ENCODE measurements at regions of chr10 and their contacts with region 1.

Region 1: GRCh38 chr10:105950410-105950809 is 1214.1 kb downstream of the SORCS1 start:
- DNase-seq: peak; percentile 5
- ATAC-seq: peak; percentile 76
- H3K4me3 ChIP-seq: no peak overlapping the region
- H3K27ac ChIP-seq: no peak overlapping the region
- H3K4me1 ChIP-seq: no peaks in the 10 kb centered on the region
- H3K27me3 ChIP-seq: no peaks in the 10 kb centered on the region
- CTCF ChIP-seq: peak; percentile 57 to 81 (median 72)
- EP300 ChIP-seq: no peak
- POLR2A ChIP-seq: no peak
- RAD21 ChIP-seq: peak; percentile 77

Region 2: DNA sequence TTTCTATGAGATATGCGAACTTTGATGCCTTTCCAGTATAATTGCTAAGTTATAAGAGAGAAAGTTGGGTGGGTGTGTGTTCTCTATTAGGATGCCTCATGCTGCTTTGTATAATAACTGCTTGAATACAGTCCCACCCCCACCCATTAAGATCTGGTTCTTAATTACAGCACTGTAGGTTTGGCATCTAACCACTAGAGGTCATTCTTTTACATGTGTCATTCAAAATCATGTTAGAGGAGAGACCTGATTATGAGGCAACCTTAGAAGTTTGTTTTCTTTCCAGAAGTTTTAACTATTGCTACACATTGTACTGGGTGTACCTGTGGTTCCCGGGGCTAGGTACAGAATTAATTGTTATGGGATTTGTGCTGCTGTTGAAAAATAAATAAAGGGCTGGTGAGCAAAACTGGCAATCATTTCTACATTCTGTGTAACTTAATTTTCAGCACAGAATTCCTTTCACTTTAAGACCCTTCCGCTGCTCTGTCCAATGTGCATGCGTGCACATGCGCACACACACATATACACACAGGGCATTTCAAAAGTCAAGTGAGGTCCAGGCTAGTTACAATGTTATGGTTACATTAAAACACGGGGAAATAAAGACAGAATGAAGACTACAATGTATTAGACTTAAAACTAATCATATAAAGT is 153.0 kb before region 1 on chr10:
- CTCF ChIA-PET with region 1: interaction called, 6 read pairs
- POLR2A ChIA-PET with region 1: no interaction called
- RAD21 ChIA-PET with region 1: no interaction called
- SMC1A ChIA-PET with region 1: interaction called, 4 read pairs
- in situ Hi-C with region 1: no loop called
- intact Hi-C with region 1: loop called (anchors 5 kb)
- DNase-seq: peak; percentile 5
- ATAC-seq: peak; percentile 97
- H3K4me3 ChIP-seq: no peak overlapping the region
- H3K27ac ChIP-seq: no peak overlapping the region
- H3K4me1 ChIP-seq: no peaks in the 10 kb centered on the region
- H3K27me3 ChIP-seq: no peaks in the 10 kb centered on the region
- CTCF ChIP-seq: peak; percentile 57 to 71 (median 59); a peak in 5 of 6 replicates
- EP300 ChIP-seq: no peak
- POLR2A ChIP-seq: no peak
- RAD21 ChIP-seq: peak; percentile 71

Region 3: GRCh38 chr10:105925045-105925785 is 25.2 kb before region 1 on chr10:
- CTCF ChIA-PET with region 1: interaction called, 5 read pairs
- POLR2A ChIA-PET with region 1: interaction called, 3 read pairs
- RAD21 ChIA-PET with region 1: interaction called, 4 read pairs
- SMC1A ChIA-PET with region 1: interaction called, 11 read pairs
- in situ Hi-C with region 1: no loop called
- intact Hi-C with region 1: no loop called
- DNase-seq: no peak
- ATAC-seq: peak; percentile 85
- H3K4me3 ChIP-seq: no peak overlapping the region
- H3K27ac ChIP-seq: no peak overlapping the region
- H3K4me1 ChIP-seq: no peaks in the 10 kb centered on the region
- H3K27me3 ChIP-seq: no peaks in the 10 kb centered on the region
- CTCF ChIP-seq: no peak
- EP300 ChIP-seq: no peak
- POLR2A ChIP-seq: no peak
- RAD21 ChIP-seq: no peak

Region 4: GRCh38 chr10:105974803-105975456 is 24.5 kb after region 1 on chr10:
- CTCF ChIA-PET with region 1: interaction called, 111 read pairs
- POLR2A ChIA-PET with region 1: no interaction called
- RAD21 ChIA-PET with region 1: interaction called, 25 read pairs
- SMC1A ChIA-PET with region 1: interaction called, 36 read pairs
- in situ Hi-C with region 1: no loop called
- intact Hi-C with region 1: loop called (anchors 2 kb)
- DNase-seq: no peak
- ATAC-seq: peak; percentile 91
- H3K4me3 ChIP-seq: no peak overlapping the region
- H3K27ac ChIP-seq: no peak overlapping the region
- H3K4me1 ChIP-seq: no peaks in the 10 kb centered on the region
- H3K27me3 ChIP-seq: no peaks in the 10 kb centered on the region
- CTCF ChIP-seq: peak; percentile 45 to 55 (median 47); a peak in 5 of 6 replicates
- EP300 ChIP-seq: no peak
- POLR2A ChIP-seq: no peak
- RAD21 ChIP-seq: peak; percentile 26; the same call in 1 of the 2 replicates

Region 5: DNA sequence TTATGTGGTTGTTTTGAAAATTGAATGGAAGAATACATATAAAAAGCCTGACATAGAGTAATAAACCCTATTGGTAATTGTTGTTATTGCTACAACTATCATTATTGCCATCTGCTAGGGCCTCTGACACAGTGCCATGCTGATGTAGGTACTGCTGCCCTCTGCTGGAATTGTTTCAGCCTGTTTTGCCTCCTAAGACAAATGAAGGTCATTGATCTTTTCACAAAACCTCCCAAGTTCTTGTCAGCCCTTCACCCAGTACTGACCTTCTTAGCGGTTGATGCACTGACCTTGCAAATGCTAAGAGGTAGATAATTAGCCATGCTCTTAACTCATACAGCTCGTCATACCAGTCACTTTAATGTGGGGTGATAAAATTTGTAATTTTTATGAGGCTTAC is 238.9 kb after region 1 on chr10:
- CTCF ChIA-PET with region 1: interaction called, 6 read pairs
- POLR2A ChIA-PET with region 1: no interaction called
- RAD21 ChIA-PET with region 1: no interaction called
- SMC1A ChIA-PET with region 1: no interaction called
- in situ Hi-C with region 1: loop called (anchors 10 kb)
- intact Hi-C with region 1: no loop called
- DNase-seq: no peak
- ATAC-seq: peak; percentile 90
- H3K4me3 ChIP-seq: no peak overlapping the region
- H3K27ac ChIP-seq: no peak overlapping the region
- H3K4me1 ChIP-seq: no peaks in the 10 kb centered on the region
- H3K27me3 ChIP-seq: no peaks in the 10 kb centered on the region
- CTCF ChIP-seq: peak; percentile 52 to 56 (median 54)
- EP300 ChIP-seq: no peak
- POLR2A ChIP-seq: no peak
- RAD21 ChIP-seq: peak; percentile 48

Measured in GM12878 (cell line).